ENCODE measurements at regions of chr10 and their contacts with region 1.

Region 1: GRCh38 chr10:30783939-30784500 is 154.5 kb upstream of the LYZL2 start:
- DNase-seq: peak; percentile 18
- H3K4me3 ChIP-seq: no peak overlapping the region
- H3K27ac ChIP-seq: no peak overlapping the region
- H3K4me1 ChIP-seq: peaks cover 4% of the 10 kb centered on the region
- H3K27me3 ChIP-seq: no peaks in the 10 kb centered on the region
- CTCF ChIP-seq: peak; percentile 60 to 88

Region 2: GRCh38 chr10:30798646-30799185 is 14.7 kb after region 1 on chr10:
- CTCF ChIA-PET with region 1: no interaction called
- dilution Hi-C with region 1: no loop called
- in situ Hi-C with region 1: no loop called
- intact Hi-C with region 1: no loop called
- DNase-seq: no peak
- H3K4me3 ChIP-seq: no peak overlapping the region
- H3K27ac ChIP-seq: no peak overlapping the region
- H3K4me1 ChIP-seq: peaks cover 3% of the 10 kb centered on the region
- H3K27me3 ChIP-seq: no peaks in the 10 kb centered on the region
- CTCF ChIP-seq: no peak

Region 3: DNA sequence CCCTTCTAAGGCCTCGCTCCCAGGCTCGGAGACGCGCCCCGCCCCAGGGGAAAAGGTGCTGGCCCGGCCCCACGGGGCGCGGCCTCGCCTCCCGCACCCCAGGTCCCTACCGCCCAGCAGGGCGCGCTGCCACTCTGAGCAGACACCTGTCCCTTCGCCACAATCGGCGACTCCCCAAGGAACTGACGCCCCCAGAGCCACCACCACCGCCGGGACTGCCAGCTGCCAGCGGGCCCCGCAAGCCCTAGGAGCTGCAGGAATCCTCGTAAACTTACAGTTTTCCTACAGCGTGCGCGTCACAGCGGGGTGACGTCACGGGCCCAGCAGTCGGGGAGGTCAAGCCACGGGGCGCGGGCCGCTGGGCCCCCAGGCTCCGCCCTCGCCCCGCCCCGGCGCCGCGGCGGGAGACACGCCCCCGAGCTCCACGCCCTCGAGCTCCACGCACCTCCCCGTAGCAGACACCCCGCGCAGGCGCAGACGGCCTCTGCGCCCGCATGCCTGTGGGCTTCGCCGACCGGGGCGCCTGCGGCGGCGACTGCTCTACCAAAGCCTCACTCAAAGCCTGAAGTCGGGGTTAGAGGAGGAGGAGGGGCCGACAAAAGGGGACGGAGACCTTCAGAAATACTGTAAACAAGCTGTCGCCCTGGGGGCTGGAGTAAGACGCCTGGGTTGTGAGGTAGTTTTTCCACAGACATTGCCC is 247.7 kb after region 1 on chr10 and contains the start of gene ZNF438:
- CTCF ChIA-PET with region 1: no interaction called
- dilution Hi-C with region 1: no loop called
- in situ Hi-C with region 1: no loop called
- intact Hi-C with region 1: loop called (anchors 5 kb)
- DNase-seq: peak; percentile 91
- H3K4me3 ChIP-seq: peak within 1 kb of the TSS; percentile 77 to 88 (median 78)
- H3K27ac ChIP-seq: peak within 1 kb of the TSS; percentile 98
- H3K4me1 ChIP-seq: peaks cover 21% of the 10 kb centered on the region
- H3K27me3 ChIP-seq: no peaks in the 10 kb centered on the region
- CTCF ChIP-seq: peak in 1 of 2 donors; percentile 76
- total RNA-seq, gene ZNF438: 1.2 to 3.2 TPM

Region 4: GRCh38 chr10:31157123-31158010 is 373.3 kb after region 1 on chr10:
- CTCF ChIA-PET with region 1: interaction called, 28 read pairs
- dilution Hi-C with region 1: no loop called
- in situ Hi-C with region 1: no loop called
- intact Hi-C with region 1: no loop called
- DNase-seq: no peak
- H3K4me3 ChIP-seq: no peak overlapping the region
- H3K27ac ChIP-seq: no peak overlapping the region
- H3K4me1 ChIP-seq: peaks cover 9% of the 10 kb centered on the region
- H3K27me3 ChIP-seq: no peaks in the 10 kb centered on the region
- CTCF ChIP-seq: no peak

Region 5: DNA sequence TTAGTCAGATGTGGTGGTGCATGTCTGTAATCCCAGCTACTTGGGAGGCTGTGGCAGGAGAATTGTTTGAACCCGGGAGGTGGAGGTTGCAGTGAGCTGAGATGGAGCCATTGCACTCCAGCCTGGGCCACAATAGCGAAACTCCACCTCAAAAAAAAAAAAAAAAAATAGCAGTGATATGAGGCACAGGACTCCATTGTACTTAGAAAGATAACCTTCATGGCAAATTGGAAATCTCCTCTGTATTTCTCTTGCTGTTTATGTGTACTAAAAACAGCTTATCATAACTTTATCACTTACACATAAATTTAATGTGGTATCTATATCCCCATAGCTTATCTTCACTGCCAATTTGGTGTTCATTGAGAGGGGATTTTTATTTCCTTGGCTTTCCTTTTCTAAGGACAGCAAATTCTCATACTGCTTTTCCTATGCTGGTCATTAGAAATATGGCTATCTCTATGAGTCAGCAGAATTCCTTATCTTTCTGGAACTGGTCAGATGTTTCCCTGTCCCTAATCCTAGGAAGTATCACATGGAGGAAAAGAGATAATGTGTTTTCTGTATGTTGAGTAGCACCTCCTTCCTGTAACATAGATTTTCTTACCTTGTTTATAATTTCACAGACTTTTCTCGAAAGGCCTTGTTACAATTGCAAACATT is 494.4 kb after region 1 on chr10:
- CTCF ChIA-PET with region 1: no interaction called
- dilution Hi-C with region 1: no loop called
- in situ Hi-C with region 1: no loop called
- intact Hi-C with region 1: no loop called
- DNase-seq: no peak
- H3K4me3 ChIP-seq: no peak overlapping the region
- H3K27ac ChIP-seq: no peak overlapping the region
- H3K4me1 ChIP-seq: no peaks in the 10 kb centered on the region
- H3K27me3 ChIP-seq: peaks cover 2% of the 10 kb centered on the region
- CTCF ChIP-seq: no peak

Region 6: DNA sequence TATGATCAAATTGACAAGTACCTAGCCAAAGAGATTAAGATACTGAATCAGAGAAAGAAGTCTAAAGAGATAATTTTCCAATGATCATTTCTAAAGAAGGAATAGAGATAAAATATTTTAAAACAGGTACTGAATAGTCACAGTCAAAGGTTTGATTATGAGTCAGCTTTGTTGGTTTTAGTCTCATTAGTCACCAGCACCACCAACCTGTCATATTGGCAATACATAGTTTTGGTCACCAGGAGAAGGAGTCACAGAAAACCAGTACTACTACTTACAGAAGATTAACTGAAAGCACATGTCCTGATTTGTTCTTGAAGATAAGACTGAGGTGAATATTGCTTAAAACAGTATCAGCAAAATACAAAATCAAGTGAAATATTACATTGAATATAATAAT is 569.6 kb after region 1 on chr10:
- CTCF ChIA-PET with region 1: no interaction called
- dilution Hi-C with region 1: no loop called
- in situ Hi-C with region 1: no loop called
- intact Hi-C with region 1: loop called (anchors 2 kb)
- DNase-seq: peak; percentile 92
- H3K4me3 ChIP-seq: peak overlapping the region in 1 of 3 experiments; percentile 17
- H3K27ac ChIP-seq: peak overlapping the region; percentile 36
- H3K4me1 ChIP-seq: peaks cover 18% of the 10 kb centered on the region
- H3K27me3 ChIP-seq: no peaks in the 10 kb centered on the region
- CTCF ChIP-seq: peak in 1 of 2 donors; percentile 40

Region 7: DNA sequence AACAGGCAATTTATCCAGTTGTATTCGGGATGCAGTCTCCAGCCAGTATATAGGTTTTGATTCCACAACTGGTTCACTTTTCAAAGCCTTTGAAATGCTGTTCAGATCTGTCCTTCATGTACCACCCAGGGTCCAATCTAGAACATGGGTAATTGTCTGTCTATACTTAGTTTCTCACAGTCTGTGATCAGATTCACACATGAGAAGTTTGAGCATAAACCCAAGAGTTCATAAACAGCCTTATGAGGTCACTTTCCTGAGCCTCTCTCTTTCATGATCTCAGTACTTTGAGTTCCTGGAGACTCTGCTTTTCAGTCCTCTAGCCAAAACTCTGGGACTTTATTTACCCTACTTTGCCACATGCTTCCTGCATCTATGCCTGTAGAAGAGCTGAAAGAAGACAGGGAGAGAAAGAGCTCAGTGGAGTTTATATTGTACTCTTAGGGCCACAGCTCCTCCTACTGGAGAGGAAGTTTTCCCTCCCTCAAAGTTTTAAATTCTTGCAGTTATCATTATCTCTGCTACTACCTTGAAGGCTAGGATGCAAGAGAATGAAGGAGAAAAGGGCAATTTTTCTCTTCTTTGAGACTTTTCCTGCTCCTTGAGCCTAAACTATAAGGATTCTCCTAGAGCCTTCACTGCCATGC is 707.0 kb after region 1 on chr10:
- CTCF ChIA-PET with region 1: interaction called, 4 read pairs
- dilution Hi-C with region 1: no loop called
- in situ Hi-C with region 1: no loop called
- intact Hi-C with region 1: loop called (anchors 1 kb)
- DNase-seq: peak; percentile 29
- H3K4me3 ChIP-seq: no peak overlapping the region
- H3K27ac ChIP-seq: no peak overlapping the region
- H3K4me1 ChIP-seq: no peaks in the 10 kb centered on the region
- H3K27me3 ChIP-seq: peaks cover 5% of the 10 kb centered on the region
- CTCF ChIP-seq: peak; percentile 72 to 79